Panc1 (cell line): ENCODE measurements at regions of chr17 and their contacts with region 1.

Region 1: DNA sequence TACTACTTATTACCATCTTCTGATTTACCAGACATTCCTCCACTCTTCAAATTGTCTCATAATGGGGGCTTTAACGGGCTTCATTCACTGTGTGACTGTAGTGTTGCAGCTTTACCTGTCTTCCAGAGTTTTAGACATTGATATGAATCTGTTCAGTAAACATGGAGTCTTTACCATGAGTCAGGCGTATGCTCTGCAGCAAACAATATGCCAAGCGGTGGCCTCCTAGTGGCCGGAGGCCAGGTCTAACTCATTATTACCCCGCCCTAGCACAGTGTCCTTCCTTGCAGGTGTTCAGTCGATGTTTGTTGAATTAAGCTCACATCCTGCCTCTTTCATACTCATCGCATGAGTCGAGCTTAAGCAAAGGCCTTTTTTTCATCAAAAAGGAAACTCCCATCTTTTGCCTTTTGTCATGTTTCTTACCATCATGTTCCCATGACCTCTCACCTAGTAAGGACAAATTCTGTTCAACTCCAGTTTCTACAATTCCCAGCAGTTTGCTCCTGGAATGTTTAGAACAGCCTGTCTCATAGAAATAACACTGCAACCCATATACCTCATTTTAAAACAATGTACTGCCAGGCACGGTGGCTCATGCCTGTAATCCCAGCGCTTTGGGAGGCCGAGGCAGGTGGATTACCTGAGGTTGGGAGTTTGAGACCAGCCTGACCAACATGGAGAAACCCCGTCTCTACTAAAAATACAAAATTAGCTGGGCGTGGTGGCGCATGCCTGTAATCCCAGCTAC is 39.4 kb downstream of the TUBD1 start:
- DNase-seq: peak; percentile 97
- ATAC-seq: peak; percentile 91
- H3K4me3 ChIP-seq: no peak overlapping the region
- H3K27ac ChIP-seq: peak overlapping the region; percentile 100
- H3K4me1 ChIP-seq: peaks cover 66% of the 10 kb centered on the region
- H3K27me3 ChIP-seq: no peaks in the 10 kb centered on the region
- CTCF ChIP-seq: peak; percentile 82

Region 2: DNA sequence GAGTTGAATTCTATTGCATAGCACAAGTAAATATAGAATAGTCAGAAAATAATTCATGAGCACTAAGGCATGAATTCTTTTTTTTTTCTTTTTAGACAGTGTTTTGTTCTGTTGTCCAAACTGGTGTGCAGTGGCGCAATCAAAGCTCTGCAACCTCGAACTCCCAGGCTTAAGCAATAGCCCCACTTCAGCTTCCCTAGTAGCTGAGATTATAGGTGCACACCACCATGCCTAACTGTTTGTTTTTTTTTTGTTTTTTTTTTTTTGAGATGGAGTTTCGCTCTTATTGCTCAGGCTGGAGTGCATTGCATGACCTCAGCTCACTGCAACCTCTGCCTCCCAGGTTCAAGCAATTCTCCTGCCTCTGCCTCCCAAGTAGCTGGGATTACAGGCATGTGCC is 22.8 kb after region 1 on chr17:
- CTCF ChIA-PET with region 1: no interaction called
- POLR2A ChIA-PET with region 1: interaction called, 13 read pairs
- in situ Hi-C with region 1: no loop called
- intact Hi-C with region 1: no loop called
- DNase-seq: no peak
- ATAC-seq: no peak
- H3K4me3 ChIP-seq: no peak overlapping the region
- H3K27ac ChIP-seq: no peak overlapping the region
- H3K4me1 ChIP-seq: 0 out of 2 replicates have a peak, but pooled peaks cover under 1% of the 10 kb centered on the region
- H3K27me3 ChIP-seq: no peaks in the 10 kb centered on the region
- CTCF ChIP-seq: no peak

Region 3: GRCh38 chr17:59941131-59941530 is 87.8 kb after region 1 on chr17:
- CTCF ChIA-PET with region 1: no interaction called
- POLR2A ChIA-PET with region 1: interaction called, 10 read pairs
- in situ Hi-C with region 1: no loop called
- intact Hi-C with region 1: no loop called
- DNase-seq: no peak
- ATAC-seq: no peak
- H3K4me3 ChIP-seq: no peak overlapping the region
- H3K27ac ChIP-seq: no peak overlapping the region
- H3K4me1 ChIP-seq: no peaks in the 10 kb centered on the region
- H3K27me3 ChIP-seq: no peaks in the 10 kb centered on the region
- CTCF ChIP-seq: no peak